Activated CD4-positive, alpha-beta T cell treated with anti-CD3 and anti-CD28 coated beads, Interleukin-2, amount 10 ng/mL, durations not matched to agents 7 days and 5 days (primary cell): ENCODE measurements at regions of chr16 and their contacts with region 1.

Region 1: DNA sequence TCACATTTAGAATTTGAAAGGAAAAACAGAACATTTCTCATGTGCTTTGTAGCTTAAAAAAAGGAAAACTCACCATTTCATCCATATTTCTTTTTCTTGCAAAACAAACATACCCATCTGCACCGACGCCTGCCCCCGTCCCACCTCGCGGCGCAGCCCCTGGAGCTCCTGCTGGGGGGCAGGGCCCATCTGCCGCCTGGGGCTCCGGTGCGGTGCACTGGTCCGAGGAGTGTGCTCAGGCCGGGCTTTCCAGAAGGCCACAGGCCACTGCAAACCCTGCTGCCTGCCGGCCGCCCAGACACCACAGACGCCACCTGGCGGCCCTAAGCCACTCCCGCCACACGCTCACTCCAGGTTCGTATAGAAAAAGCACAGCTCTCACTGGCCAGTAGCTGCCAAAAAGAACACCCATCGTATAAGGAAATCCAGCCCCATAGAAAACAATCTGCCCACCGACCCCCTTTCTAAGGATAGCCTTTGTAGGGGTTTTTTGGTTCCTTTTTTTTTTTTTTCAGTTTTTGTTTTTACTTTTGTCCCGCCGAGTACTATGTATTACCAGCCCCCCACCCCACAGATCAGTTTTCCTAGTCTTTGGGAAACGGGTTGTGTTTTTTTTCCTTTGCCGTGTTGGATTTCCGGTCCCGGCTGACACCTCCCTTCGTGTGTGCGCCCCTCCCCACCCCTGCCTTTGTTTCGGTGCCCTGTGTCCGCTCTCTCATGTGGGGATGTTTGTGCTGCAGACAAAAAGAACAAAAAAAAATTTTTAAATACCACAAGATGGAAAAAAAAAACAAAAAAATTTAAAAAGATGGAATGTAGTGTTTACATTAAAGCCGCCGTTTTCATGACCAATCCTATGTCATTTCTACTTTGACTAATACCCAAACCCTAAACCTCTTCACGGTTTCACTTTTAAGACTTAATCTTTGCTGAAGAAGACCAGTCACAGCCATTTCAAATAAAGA is 68.8 kb downstream of the AMFR start:
- DNase-seq: peak; percentile 57
- H3K4me3 Mint-ChIP-seq: peak overlapping the region; percentile 75
- H3K27ac Mint-ChIP-seq: peak overlapping the region; percentile 96
- H3K4me1 Mint-ChIP-seq: peaks cover 45% of the 10 kb centered on the region
- H3K27me3 Mint-ChIP-seq: no peaks in the 10 kb centered on the region

Region 2: GRCh38 chr16:56300891-56301850 is 55.4 kb before region 1 on chr16:
- CTCF ChIA-PET with region 1: no interaction called
- POLR2A ChIA-PET with region 1: no interaction called
- DNase-seq: no peak
- H3K4me3 Mint-ChIP-seq: no peak overlapping the region
- H3K27ac Mint-ChIP-seq: no peak overlapping the region
- H3K4me1 Mint-ChIP-seq: peaks cover 3% of the 10 kb centered on the region
- H3K27me3 Mint-ChIP-seq: peaks cover 4% of the 10 kb centered on the region

Region 3: GRCh38 chr16:56369202-56369601 is 12.6 kb after region 1 on chr16:
- CTCF ChIA-PET with region 1: interaction called, 10 read pairs
- POLR2A ChIA-PET with region 1: no interaction called
- DNase-seq: no peak
- H3K4me3 Mint-ChIP-seq: no peak overlapping the region
- H3K27ac Mint-ChIP-seq: no peak overlapping the region
- H3K4me1 Mint-ChIP-seq: peaks cover 22% of the 10 kb centered on the region
- H3K27me3 Mint-ChIP-seq: no peaks in the 10 kb centered on the region